ENCODE measurements at regions of chr7 and their contacts with region 1.

Region 1: DNA sequence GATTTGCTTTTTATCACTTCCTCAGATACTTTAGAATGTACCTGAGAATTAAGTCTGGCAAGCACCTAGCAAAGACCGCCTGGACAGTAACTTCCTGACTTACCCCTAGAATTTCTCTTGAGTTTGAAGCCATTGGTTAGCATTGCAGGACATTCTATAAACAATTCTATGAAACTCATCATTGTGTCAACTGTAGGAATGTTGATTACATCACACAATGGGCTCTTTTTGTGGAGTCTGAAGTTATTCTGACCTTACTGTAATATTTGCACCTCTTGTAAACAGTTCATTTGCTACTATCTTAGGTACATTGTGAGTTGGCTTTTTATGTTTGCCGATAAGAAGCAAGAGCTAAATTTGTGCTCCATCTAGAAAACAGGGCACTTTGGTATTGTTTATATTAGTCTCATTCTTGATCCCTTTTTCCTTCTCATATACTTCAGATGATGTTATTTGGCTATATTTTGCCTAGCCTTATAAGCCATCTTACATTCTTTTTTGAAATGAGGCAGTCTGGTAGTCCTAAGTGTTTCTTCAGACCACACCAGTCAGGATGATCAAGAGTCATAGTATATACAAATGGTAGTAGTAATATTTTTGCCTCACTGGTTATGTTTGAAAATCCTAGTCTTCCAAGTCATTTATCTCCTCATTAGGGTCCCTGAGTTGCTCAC is 52.4 kb downstream of the CASD1 start:
- DNase-seq: no peak
- ATAC-seq: no peak

Region 2: GRCh38 chr7:92655346-92655884 is 1906.6 kb before region 1 on chr7:
- intact Hi-C with region 1: no loop called
- DNase-seq: no peak
- ATAC-seq: no peak

Region 3: DNA sequence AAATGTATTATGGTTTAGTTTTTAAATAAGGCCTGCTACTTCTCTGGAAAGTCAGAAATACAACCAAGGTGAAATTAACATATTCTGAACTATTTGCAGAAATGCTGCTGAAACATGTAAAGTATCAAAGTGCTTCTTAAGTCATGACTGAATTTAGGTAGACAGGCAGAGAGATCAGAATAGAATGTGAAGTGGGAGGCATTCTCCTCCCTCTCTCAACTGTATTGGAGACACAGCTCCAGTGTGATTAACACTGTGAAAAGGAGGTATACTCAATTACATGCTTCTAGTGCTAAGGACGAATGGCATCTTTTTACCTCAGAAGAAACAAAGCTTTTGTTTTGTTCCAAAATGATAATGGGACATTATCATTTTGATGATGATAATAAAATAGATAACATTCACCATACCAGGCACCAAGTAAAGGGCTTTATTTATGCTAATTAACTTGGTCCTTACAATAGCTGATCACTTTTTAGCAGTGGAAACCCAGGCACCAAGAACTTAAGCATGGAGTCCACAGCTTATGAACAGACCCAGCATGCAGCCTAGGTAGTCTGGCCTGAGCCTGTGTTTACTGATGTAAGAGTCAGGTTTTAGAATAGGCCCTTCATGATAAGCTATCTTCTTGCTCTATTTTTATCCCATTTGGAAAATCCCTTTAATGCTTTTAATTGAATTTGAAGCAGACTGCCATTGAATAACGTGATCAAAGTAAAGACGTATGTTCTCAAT is 371.4 kb after region 1 on chr7:
- intact Hi-C with region 1: no loop called
- DNase-seq: no peak
- ATAC-seq: no peak

Region 4: GRCh38 chr7:96169439-96169838 is 1607.5 kb after region 1 on chr7:
- intact Hi-C with region 1: loop called (anchors 5 kb)
- DNase-seq: no peak
- ATAC-seq: no peak

Measured in sciatic nerve (tissue), 2 donors.